Dendritic cell treated with granulocyte-macrophage colony-stimulating factor and Interleukin-4, amounts not matched to agents 40 ng/mL and 50 ng/mL, for 4 days (primary cell): ENCODE measurements at regions of chr6 and their contacts with region 1.

Region 1: DNA sequence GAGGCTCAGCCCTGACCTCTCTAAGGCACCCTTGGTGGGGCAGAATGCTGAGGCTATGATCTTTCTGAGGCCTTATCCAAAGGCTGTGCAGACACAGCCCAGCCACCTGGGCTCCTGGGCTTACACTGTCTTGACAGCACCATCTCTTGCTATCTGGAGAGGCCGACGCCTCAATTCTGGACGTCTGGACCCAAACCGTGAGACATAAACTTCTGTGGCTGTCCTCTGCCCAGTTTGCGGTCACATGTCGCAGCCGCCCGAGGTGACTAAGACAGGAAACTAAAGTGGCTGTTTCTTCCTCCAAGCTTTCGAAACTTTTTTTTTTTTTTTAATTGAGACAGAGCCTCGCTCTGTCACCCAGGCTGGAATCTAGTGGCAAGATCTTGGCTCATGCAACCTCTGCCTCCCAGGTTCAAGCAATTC is 49.3 kb downstream of the PRR18 start:
- H3K4me3 Mint-ChIP-seq: peak overlapping the region; percentile 68
- H3K27ac Mint-ChIP-seq: peak overlapping the region; percentile 100
- H3K4me1 Mint-ChIP-seq: peaks cover 62% of the 10 kb centered on the region
- H3K27me3 Mint-ChIP-seq: no peaks in the 10 kb centered on the region

Region 2: GRCh38 chr6:166342349-166343149 is 83.7 kb after region 1 on chr6 and contains the start of gene SFT2D1:
- intact Hi-C with region 1: loop called (anchors 2 kb)
- H3K4me3 Mint-ChIP-seq: peak within 1 kb of the TSS; percentile 92
- H3K27ac Mint-ChIP-seq: peak within 1 kb of the TSS; percentile 94
- H3K4me1 Mint-ChIP-seq: peaks cover 27% of the 10 kb centered on the region
- H3K27me3 Mint-ChIP-seq: no peaks in the 10 kb centered on the region

Region 3: DNA sequence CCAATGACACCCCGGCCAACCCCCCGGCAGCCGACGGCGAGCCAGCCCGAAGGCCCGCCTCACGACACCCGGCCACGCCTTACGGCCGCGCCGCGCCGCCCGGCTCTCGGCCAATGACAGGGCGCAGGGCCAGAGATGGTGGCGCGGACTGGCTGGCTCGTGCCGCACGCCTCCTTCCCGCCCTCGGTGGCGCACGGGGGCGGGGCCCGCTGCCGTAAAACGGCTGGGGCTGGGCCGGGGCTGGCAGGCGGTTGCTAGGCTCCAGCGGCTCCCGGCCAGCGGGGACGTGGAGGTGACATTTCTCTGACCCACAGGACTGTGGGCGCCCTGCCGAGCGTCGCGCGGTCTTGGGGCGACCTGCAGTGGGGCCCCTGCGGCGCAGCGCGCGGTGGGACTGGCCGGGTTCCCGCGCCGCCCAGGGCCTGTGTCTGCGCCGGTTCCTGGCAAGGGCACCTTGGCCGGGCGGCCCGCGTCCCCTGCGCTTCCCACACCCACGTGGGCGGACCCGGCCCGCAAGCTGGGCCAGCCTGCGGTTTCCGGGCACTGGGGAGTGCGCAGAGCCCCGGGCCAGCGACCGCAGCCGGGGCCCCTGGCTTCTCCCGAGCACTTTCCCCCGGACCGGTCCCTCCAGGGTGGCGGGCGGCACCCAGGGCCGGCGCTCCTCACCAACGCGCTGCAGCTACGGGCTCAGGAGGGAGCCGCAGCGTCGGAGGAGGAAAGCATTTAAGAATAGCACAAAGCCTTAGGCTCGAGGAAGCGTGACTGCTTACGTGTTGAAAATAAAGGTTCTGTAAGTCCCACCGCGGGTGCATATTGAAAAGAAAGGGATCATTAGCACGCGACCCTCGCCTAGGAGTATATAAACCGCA is 124.3 kb after region 1 on chr6 and contains the start of gene MPC1:
- intact Hi-C with region 1: loop called (anchors 1 kb)
- H3K4me3 Mint-ChIP-seq: peak within 1 kb of the TSS; percentile 96
- H3K27ac Mint-ChIP-seq: peak within 1 kb of the TSS; percentile 92
- H3K4me1 Mint-ChIP-seq: peaks cover 11% of the 10 kb centered on the region
- H3K27me3 Mint-ChIP-seq: no peaks in the 10 kb centered on the region

Region 4: GRCh38 chr6:166627033-166627874 is 368.4 kb after region 1 on chr6 and contains the start of gene RPS6KA2:
- intact Hi-C with region 1: loop called (anchors 2 kb)
- H3K4me3 Mint-ChIP-seq: peak within 1 kb of the TSS; percentile 88
- H3K27ac Mint-ChIP-seq: peak within 1 kb of the TSS; percentile 94
- H3K4me1 Mint-ChIP-seq: peaks cover 30% of the 10 kb centered on the region
- H3K27me3 Mint-ChIP-seq: peaks cover 51% of the 10 kb centered on the region